ENCODE measurements at regions of chr12 and their contacts with region 1.

Region 1: DNA sequence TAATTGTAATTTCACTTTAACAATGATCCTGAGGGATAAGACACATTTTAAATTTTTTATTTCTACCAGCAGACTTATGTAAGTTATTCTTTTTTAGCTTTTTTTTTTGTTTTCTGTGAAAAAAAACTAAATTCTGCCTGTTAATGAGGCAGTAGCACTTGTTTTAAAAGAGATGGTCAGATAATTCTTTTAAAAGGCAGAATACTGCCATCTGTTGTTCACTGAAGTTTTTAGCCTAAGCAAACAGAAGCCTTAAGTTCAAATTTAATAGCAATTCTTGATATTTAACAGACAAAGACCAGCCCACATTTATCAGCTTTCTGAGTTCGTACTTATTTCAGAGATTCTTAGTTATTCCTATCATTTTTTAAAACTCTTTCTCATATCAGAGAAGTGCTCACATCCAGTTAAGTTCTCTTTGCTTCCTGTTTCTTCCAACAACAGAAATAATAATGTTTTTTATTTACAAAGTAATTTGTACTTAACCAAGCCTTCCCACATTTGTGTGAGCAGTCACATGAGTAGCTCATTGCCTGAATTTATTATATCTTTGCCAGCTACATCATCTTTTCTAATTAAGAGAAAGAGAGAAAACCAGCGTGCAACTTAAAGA is 93.4 kb upstream of the SLCO1C1 start:
- DNase-seq: no peak
- ATAC-seq: peak; percentile 18

Region 2: DNA sequence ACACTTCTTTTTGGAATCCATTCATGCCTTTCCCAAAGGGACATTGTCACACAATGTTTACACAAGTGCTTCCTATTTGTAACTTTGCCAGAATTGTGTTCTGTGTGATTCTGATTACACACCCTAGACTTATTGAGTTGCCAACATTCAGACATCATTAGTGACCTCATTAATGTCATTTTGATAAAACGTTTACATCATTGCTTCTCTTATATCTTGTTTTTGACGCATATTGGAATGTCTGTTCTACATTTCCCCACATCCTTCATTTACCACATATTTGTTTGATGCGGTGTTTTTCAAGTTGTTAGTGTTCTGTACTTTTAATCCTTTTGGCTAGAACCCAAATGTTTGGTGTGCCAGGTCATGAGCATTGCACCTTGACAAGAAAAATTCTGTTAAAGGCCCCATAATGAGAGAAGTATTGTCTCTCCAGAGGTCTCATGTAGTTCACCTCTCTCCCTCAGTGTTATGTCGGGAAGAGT is 857.0 kb before region 1 on chr12:
- intact Hi-C with region 1: loop called (anchors 10 kb)
- DNase-seq: no peak
- ATAC-seq: peak; percentile 80

Region 3: DNA sequence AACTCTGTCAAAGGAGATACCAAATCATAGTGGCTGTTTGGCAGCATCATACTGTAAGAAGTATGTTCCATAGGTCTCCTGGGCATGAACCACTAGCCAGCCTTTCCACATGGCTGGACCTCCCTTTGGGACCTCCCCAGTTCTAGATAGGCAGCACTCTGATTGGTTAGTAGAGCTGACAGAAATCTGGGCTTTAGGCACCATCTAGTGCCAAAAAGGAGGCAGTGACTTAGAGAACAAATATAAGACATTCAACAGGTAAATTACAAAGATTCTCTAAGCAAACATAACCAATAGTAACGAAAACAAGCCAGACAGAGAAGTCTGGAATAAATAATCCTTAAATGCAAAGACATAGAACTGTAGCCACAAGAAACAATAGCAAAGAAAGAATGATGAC is 381.4 kb before region 1 on chr12:
- intact Hi-C with region 1: no loop called
- DNase-seq: peak; percentile 5
- ATAC-seq: peak; percentile 50

Region 4: DNA sequence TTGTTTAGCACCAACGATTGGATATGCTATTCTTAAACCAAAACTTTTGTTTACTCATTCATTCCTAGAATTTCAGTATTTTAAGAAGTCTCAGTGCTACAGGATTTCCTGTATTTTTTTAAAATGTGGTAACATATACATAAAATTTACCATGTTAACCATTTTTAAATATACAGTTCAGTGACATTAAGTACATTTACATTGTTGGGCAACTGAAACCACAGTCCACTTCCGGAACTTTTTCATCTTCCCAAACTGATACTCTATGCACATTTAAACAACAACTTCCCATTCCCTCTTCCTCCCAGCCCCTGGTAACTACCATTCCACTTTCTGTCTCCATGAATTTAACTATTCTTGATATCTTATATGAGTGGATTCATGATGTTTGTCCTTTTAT is 203.1 kb before region 1 on chr12:
- intact Hi-C with region 1: loop called (anchors 10 kb)
- DNase-seq: no peak
- ATAC-seq: no peak

Region 5: GRCh38 chr12:20463913-20464524 is 137.8 kb before region 1 on chr12:
- intact Hi-C with region 1: loop called (anchors 5 kb)
- DNase-seq: no peak
- ATAC-seq: no peak

Measured in Right ventricle myocardium inferior (tissue), 1 donor.